Activated naive CD4-positive, alpha-beta T cell treated with anti-CD3 and anti-CD28 coated beads for 36 hours (primary cell): ENCODE measurements at regions of chr12 and their contacts with region 1.

Region 1: GRCh38 chr12:116142936-116143898 is 134.3 kb downstream of the MED13L start:
- DNase-seq: no peak
- H3K4me3 Mint-ChIP-seq: no peak overlapping the region
- H3K27ac Mint-ChIP-seq: peak overlapping the region; percentile 13
- H3K4me1 Mint-ChIP-seq: peaks cover 55% of the 10 kb centered on the region
- H3K27me3 Mint-ChIP-seq: no peaks in the 10 kb centered on the region

Region 2: DNA sequence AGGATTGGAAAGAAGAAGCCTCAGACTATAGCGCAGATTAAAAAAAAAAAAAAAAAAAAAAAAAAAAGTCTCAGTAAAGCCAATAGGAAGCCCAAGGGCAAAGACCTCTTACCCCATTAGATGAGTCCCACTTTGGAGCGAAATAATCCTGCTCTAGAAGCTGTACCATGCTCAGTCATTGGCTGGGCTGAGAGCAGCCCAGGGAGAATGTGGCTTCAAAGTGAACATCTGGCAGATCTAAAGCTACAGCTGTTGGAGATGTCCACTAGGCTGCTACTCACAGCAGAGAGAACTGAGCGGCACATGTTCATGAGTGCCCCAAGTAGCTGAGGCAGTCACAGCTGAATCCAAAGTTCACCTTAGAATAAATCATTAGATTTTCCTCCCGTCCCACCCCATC is 426.7 kb before region 1 on chr12:
- CTCF ChIA-PET with region 1: no interaction called
- intact Hi-C with region 1: no loop called
- DNase-seq: no peak
- H3K4me3 Mint-ChIP-seq: no peak overlapping the region
- H3K27ac Mint-ChIP-seq: no peak overlapping the region
- H3K4me1 Mint-ChIP-seq: no peaks in the 10 kb centered on the region
- H3K27me3 Mint-ChIP-seq: peaks cover 3% of the 10 kb centered on the region

Region 3: DNA sequence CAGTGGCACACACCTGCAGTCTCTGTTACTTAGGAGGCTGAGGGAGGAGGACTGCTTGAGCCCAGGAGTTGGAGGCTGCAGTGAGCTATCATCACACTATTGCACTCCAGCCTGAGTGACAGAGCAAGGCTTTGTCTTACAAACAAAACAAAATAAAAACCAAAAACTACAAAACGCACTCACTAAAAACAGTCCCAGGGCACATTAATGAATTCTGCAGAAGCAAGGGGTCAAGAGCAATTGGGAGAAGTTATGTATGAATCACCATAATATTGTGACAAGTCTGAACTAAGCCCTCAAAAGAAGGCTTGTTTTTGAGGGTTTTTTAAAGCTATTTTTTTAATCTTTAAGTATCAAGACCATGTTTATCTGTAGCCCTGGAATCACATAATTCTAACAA is 66.8 kb before region 1 on chr12:
- CTCF ChIA-PET with region 1: no interaction called
- intact Hi-C with region 1: no loop called
- DNase-seq: no peak
- H3K4me3 Mint-ChIP-seq: no peak overlapping the region
- H3K27ac Mint-ChIP-seq: no peak overlapping the region
- H3K4me1 Mint-ChIP-seq: peaks cover 16% of the 10 kb centered on the region
- H3K27me3 Mint-ChIP-seq: no peaks in the 10 kb centered on the region

Region 4: GRCh38 chr12:116172224-116172849 is 29.1 kb after region 1 on chr12:
- CTCF ChIA-PET with region 1: interaction called, 3 read pairs
- intact Hi-C with region 1: loop called (anchors 1 kb)
- DNase-seq: peak; percentile 78
- H3K4me3 Mint-ChIP-seq: peak overlapping the region; percentile 58
- H3K27ac Mint-ChIP-seq: peak overlapping the region; percentile 92
- H3K4me1 Mint-ChIP-seq: peaks cover 67% of the 10 kb centered on the region
- H3K27me3 Mint-ChIP-seq: no peaks in the 10 kb centered on the region

Region 5: DNA sequence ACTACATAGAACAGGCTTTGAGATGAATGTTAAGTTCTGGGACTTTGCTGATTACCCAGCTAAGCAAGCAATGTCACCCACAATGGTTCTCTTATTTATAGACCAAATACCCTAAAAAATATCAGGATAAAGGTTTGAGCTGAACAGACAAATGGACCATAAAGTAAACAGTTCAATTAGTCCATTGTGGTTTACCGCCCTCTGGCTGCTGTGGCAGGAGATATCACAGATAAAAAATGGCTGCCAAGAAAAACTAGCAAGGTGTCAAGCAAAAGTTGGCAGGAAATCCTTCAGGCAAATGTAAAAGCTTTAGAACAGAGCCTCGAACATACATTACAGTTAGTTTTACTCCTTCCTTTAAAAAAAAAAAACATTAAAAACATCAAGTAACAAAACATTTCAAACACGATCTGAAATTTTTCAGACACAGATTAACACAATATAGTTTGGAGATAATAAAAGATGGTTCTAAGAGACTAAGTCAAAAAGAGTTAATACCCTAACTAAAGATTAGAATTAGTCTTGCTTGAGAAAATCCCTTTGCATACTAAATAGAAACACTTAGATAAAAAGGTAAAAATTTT is 93.0 kb after region 1 on chr12:
- CTCF ChIA-PET with region 1: interaction called, 24 read pairs
- intact Hi-C with region 1: loop called (anchors 1 kb)
- DNase-seq: peak; percentile 77
- H3K4me3 Mint-ChIP-seq: peak overlapping the region; percentile 4
- H3K27ac Mint-ChIP-seq: peak overlapping the region; percentile 71
- H3K4me1 Mint-ChIP-seq: peaks cover 37% of the 10 kb centered on the region
- H3K27me3 Mint-ChIP-seq: no peaks in the 10 kb centered on the region

Region 6: GRCh38 chr12:116434155-116435011 is 291.2 kb after region 1 on chr12:
- CTCF ChIA-PET with region 1: no interaction called
- intact Hi-C with region 1: no loop called
- DNase-seq: no peak
- H3K4me3 Mint-ChIP-seq: no peak overlapping the region
- H3K27ac Mint-ChIP-seq: no peak overlapping the region
- H3K4me1 Mint-ChIP-seq: peaks cover 4% of the 10 kb centered on the region
- H3K27me3 Mint-ChIP-seq: no peaks in the 10 kb centered on the region

Region 7: GRCh38 chr12:116599285-116600136 is 456.3 kb after region 1 on chr12:
- CTCF ChIA-PET with region 1: interaction called, 13 read pairs
- intact Hi-C with region 1: loop called (anchors 1 kb)
- DNase-seq: peak; percentile 73
- H3K4me3 Mint-ChIP-seq: no peak overlapping the region
- H3K27ac Mint-ChIP-seq: no peak overlapping the region
- H3K4me1 Mint-ChIP-seq: peaks cover 13% of the 10 kb centered on the region
- H3K27me3 Mint-ChIP-seq: no peaks in the 10 kb centered on the region